ENCODE measurements at regions of chr14 and their contacts with region 1.

Region 1: DNA sequence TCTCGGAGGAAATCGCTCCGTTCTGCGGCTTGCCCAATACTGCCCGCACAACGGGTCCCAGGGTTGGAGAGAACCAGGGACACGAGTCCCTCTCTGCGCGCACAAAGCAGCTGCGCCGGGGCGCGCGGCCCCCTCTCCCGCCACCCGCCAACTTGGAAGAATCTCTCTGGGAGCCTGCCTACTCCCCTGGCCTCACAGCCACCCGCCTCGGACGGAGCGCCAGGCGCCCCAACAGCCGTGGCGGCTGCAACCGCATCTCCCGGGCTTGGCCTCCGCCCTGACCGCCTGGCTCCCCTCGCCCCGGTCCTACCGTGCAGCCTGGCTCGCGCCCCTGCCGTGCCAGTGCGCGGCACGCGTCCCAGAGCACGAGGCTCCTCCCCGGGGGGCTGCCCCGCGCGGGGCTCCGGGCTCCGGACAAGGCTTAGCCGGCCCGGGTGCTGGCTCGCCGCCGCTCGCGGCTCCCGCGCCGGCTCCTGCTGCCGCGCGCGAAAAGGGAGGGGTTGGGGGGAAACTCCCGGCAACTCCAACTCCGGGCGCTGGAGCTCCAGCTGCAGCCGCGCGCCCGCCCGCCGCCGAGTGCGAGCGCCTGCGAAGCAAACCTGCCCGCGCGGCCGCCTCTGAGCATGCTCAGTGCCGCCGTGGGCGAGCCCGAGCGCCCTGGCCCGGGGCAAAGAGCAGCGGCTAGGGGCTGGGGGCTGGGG is at the start of gene STXBP6:
- DNase-seq: peak; percentile 74 to 83
- ATAC-seq: peak; percentile 79 to 92 (median 88)
- H3K4me3 ChIP-seq: peak within 1 kb of the TSS; percentile 30 to 83 (median 77)
- H3K27ac ChIP-seq: peak within 1 kb of the TSS; percentile 70 to 95 (median 89)
- H3K4me1 ChIP-seq: peaks cover 0 to 42% (median 33%) of the 10 kb centered on the region in 9 donors
- H3K27me3 ChIP-seq: peaks cover 0 to 61% (median 0%) of the 10 kb centered on the region in 7 donors
- CTCF ChIP-seq: peak in 1 of 9 donors; percentile 6
- total RNA-seq, gene STXBP6: 12.2 to 49.0 (median 24.4) TPM

Region 2: GRCh38 chr14:24734878-24735500 is 314.7 kb before region 1 on chr14:
- intact Hi-C with region 1: loop called in 8 of 10 experiments (anchors 2 to 10 kb)
- DNase-seq: peak in 1 of 2 donors; percentile 66
- ATAC-seq: peak in 6 of 8 donors; percentile 42 to 83 (median 72)
- H3K4me3 ChIP-seq: no peak overlapping the region
- H3K27ac ChIP-seq: no peak overlapping the region
- H3K4me1 ChIP-seq: peaks cover 0 to 5% (median 0%) of the 10 kb centered on the region in 9 donors
- H3K27me3 ChIP-seq: no peaks in the 10 kb centered on the region
- CTCF ChIP-seq: peak; percentile 58 to 91 (median 80)

Region 3: GRCh38 chr14:24817212-24818057 is 232.3 kb before region 1 on chr14:
- intact Hi-C with region 1: loop called in 1 of 10 experiments (anchors 5 kb)
- DNase-seq: peak in 1 of 2 donors; percentile 61
- ATAC-seq: peak; percentile 48 to 81 (median 70)
- H3K4me3 ChIP-seq: no peak overlapping the region
- H3K27ac ChIP-seq: peak overlapping the region in 9 of 10 donors; percentile 48 to 82 (median 76)
- H3K4me1 ChIP-seq: peaks cover 21 to 57% (median 42%) of the 10 kb centered on the region in 9 donors
- H3K27me3 ChIP-seq: no peaks in the 10 kb centered on the region
- CTCF ChIP-seq: peak in 7 of 9 donors; percentile 22 to 70 (median 47)

Region 4: GRCh38 chr14:24900269-24901100 is 149.2 kb before region 1 on chr14:
- intact Hi-C with region 1: no loop called
- DNase-seq: no peak
- ATAC-seq: peak; percentile 63 to 87 (median 76)
- H3K4me3 ChIP-seq: peak overlapping the region in 2 of 10 donors; percentile 10 to 18
- H3K27ac ChIP-seq: peak overlapping the region in 9 of 10 donors; percentile 23 to 70 (median 52)
- H3K4me1 ChIP-seq: peaks cover 0 to 34% (median 22%) of the 10 kb centered on the region in 9 donors
- H3K27me3 ChIP-seq: no peaks in the 10 kb centered on the region
- CTCF ChIP-seq: no peak

Region 5: GRCh38 chr14:24965934-24966578 is 83.7 kb before region 1 on chr14:
- intact Hi-C with region 1: loop called in 4 of 10 experiments (anchors 5 to 10 kb)
- DNase-seq: peak in 1 of 2 donors; percentile 24
- ATAC-seq: peak; percentile 81 to 94 (median 89)
- H3K4me3 ChIP-seq: peak overlapping the region in 1 of 10 donors; percentile 19
- H3K27ac ChIP-seq: peak overlapping the region in 9 of 10 donors; percentile 20 to 82 (median 68)
- H3K4me1 ChIP-seq: peaks cover 5 to 51% (median 33%) of the 10 kb centered on the region in 9 donors
- H3K27me3 ChIP-seq: no peaks in the 10 kb centered on the region
- CTCF ChIP-seq: no peak

Region 6: DNA sequence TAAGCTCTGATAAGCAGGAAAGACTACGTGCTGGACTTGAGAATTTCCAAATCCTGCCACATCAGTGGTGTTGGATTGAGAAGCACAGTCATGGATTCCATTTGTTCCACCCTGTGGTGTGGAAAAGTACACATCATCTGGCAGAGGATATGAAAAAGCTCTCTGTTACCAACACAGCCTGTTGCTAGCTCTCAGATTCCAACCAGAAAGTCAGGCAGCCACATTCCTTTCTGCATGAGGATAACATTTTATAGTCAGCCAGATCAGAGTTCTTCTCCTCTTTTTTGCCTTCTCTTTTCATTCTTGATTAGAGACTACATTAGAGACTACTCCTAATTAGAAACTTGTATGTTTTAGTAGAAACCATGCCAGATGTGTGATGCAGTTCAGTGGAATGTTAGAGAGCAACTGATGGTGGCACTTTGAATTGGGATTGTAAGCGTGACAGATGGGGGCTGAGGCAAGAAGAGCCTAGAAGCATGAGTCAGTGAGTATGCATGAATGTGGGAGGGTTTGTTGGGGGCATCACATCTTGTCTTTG is 61.4 kb after region 1 on chr14:
- intact Hi-C with region 1: loop called in 3 of 10 experiments (anchors 1 to 5 kb)
- DNase-seq: peak in 1 of 2 donors; percentile 66
- ATAC-seq: peak; percentile 95 to 99 (median 97)
- H3K4me3 ChIP-seq: peak overlapping the region in 6 of 10 donors; percentile 7 to 41 (median 16)
- H3K27ac ChIP-seq: peak overlapping the region; percentile 27 to 81 (median 58)
- H3K4me1 ChIP-seq: peaks cover 6 to 24% (median 14%) of the 10 kb centered on the region in 9 donors
- H3K27me3 ChIP-seq: no peaks in the 10 kb centered on the region
- CTCF ChIP-seq: no peak

Region 7: GRCh38 chr14:25132732-25133422 is 83.2 kb after region 1 on chr14:
- intact Hi-C with region 1: loop called in 6 of 10 experiments (anchors 2 to 5 kb)
- DNase-seq: peak; percentile 44 to 51
- ATAC-seq: peak; percentile 92 to 97 (median 96)
- H3K4me3 ChIP-seq: peak overlapping the region in 3 of 10 donors; percentile 6 to 9 (median 8)
- H3K27ac ChIP-seq: no peak overlapping the region
- H3K4me1 ChIP-seq: peaks cover 0 to 9% (median 0%) of the 10 kb centered on the region in 9 donors
- H3K27me3 ChIP-seq: peaks cover 0 to 34% (median 11%) of the 10 kb centered on the region in 7 donors
- CTCF ChIP-seq: peak; percentile 77 to 93 (median 87)

Region 8: GRCh38 chr14:25150934-25151790 is 101.4 kb after region 1 on chr14:
- intact Hi-C with region 1: no loop called
- DNase-seq: no peak
- ATAC-seq: no peak
- H3K4me3 ChIP-seq: no peak overlapping the region
- H3K27ac ChIP-seq: no peak overlapping the region
- H3K4me1 ChIP-seq: peaks cover 0 to 4% (median 0%) of the 10 kb centered on the region in 9 donors
- H3K27me3 ChIP-seq: peaks cover 0 to 6% (median 0%) of the 10 kb centered on the region in 7 donors
- CTCF ChIP-seq: peak; percentile 54 to 90 (median 83)

Region 9: GRCh38 chr14:25274529-25274928 is 224.8 kb after region 1 on chr14:
- intact Hi-C with region 1: no loop called
- DNase-seq: no peak
- ATAC-seq: no peak
- H3K4me3 ChIP-seq: no peak overlapping the region
- H3K27ac ChIP-seq: no peak overlapping the region
- H3K4me1 ChIP-seq: no peaks in the 10 kb centered on the region
- H3K27me3 ChIP-seq: no peaks in the 10 kb centered on the region
- CTCF ChIP-seq: no peak